ENCODE measurements at regions of chr12 and their contacts with region 1.

Region 1: GRCh38 chr12:124595444-124595843 is 28.0 kb upstream of the NCOR2 start:
- DNase-seq: no peak
- ATAC-seq: no peak
- H3K4me3 ChIP-seq: no peak overlapping the region
- H3K4me3 Mint-ChIP-seq: no peak overlapping the region
- H3K27ac ChIP-seq: no peak overlapping the region
- H3K27ac Mint-ChIP-seq: no peak overlapping the region
- H3K4me1 ChIP-seq: peaks cover 0 to 2% of the 10 kb centered on the region in 2 experiments
- H3K4me1 Mint-ChIP-seq: peaks cover 0 to 7% (median 0%) of the 10 kb centered on the region in 3 donors
- H3K27me3 ChIP-seq: peaks cover 0 to 27% of the 10 kb centered on the region in 2 experiments
- H3K27me3 Mint-ChIP-seq: no peaks in the 10 kb centered on the region

Region 2: DNA sequence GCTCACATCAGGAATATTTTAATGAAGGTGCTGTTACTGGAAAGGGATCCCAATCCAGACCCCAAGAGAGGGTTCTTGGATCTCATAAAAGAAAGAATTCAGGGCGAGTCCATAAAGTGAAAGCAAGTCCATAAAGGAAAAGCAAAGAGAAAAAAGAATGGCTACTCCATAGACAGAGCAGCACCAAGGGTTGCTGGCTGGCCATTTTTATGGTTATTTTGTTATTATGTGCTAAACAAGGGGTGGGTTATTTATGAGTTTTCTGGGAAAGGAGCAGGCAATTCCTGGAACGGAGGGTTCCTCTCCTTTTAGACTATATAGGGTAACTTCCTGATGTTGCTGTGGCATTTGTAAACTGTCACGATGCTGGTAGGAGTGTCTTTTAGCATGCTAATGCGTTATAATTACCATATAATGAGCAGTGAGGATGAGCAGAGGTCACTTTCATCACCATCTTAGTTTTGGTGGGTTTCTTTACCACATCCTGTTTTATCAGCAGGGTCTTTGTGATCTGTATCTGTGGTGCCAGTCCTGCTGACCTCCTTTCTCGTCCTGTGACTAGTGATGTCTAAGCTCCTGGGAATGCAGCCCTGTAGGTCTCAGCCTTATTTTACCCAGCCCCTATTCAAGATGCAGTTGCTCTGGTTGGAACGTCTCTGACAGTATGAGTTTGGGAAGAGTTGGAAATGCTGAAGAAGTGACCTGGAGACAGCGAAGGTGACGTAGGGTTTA is 522.0 kb before region 1 on chr12:
- CTCF ChIA-PET with region 1: no interaction called
- POLR2A ChIA-PET with region 1: interaction called in 1 of 2 experiments, 10 read pairs
- DNase-seq: no peak
- ATAC-seq: no peak
- H3K4me3 ChIP-seq: no peak overlapping the region
- H3K4me3 Mint-ChIP-seq: no peak overlapping the region
- H3K27ac ChIP-seq: no peak overlapping the region
- H3K27ac Mint-ChIP-seq: no peak overlapping the region
- H3K4me1 ChIP-seq: no peaks in the 10 kb centered on the region
- H3K4me1 Mint-ChIP-seq: peaks cover 0 to 2% (median 0%) of the 10 kb centered on the region in 3 donors
- H3K27me3 ChIP-seq: peaks cover 0 to 5% of the 10 kb centered on the region in 2 experiments
- H3K27me3 Mint-ChIP-seq: peaks cover 0 to 9% of the 10 kb centered on the region in 2 donors